H1 (cell line): ENCODE measurements at regions of chr15 and their contacts with region 1.

Region 1: DNA sequence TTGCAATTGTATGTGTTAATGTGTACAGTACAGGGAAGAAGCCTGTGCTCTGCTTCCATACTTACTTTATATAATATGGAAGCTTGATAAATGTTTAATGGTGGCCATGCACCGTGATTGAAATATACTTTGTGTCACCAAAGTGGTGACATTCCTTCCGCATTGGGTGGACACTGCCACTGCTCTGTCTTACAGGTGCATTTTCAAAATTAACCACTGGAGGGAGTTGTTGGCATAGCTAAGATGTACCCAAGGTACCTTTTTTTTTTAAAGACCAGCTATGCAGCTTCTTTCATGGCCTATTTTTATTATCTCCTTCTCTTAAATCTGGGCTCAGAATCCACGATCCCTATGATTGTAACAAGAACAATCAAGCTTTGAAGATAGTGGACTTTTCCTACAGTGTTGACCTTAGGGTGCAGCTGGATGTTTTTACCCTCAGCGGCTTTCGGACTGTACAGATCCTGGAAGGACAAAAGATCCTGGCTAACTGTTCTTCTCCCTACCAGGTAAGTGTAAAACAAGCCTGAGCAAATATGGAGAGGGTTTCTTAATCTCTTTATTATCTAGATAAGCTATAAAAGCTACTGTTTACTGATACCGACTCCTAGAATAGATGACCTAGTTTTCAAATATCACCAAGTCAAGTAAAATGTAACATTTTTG is 21.6 kb upstream of the PAK6 start:
- DNase-seq: no peak
- H3K4me3 ChIP-seq: no peak overlapping the region
- H3K27ac ChIP-seq: no peak overlapping the region
- H3K4me1 ChIP-seq: no peaks in the 10 kb centered on the region
- H3K27me3 ChIP-seq: no peaks in the 10 kb centered on the region
- CTCF ChIP-seq: peak; percentile 28 to 89 (median 78)
- EP300 ChIP-seq: no peak
- POLR2A ChIP-seq: no peak
- RAD21 ChIP-seq: peak; percentile 89 to 93

Region 2: DNA sequence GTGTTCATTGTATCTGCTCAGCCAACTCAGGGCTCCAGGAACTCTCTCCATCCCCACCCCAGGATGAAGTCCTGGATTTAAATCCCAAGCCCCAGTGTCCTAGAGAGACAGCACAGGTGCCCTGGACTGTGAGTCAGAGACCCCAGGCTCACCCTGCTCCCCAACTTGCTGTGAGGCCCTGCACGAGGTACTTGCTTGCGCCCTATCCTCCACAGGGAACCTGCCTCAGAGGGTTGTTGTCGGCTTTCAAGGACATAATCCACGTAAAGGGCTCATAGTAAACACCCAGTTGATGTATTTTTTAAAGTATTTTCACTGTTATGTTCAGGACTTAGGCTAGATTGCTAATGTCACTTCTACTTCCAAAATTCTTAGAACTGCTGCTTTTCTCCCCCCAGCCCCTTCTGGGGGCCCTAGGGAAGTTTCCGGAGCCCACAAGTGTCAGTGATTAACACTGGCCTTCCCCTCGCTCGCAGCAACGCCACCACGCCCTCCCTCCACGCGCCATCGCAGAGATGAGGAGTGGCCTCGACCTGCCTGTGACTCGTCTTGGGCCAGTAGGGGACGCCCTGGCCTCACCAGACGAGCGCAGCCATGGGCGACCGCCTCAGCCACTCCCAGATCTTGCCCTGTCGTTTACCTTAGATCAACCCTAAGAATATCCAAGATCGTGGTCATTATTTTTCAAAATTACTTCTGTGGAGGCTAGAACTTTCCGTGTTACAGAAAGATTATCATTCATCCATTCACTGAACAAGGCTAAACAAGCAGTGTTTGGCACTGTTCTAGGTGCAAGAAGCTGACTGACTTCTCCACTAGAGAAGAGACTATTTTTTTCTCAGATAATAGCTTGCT is 172.3 kb before region 1 on chr15:
- CTCF ChIA-PET with region 1: interaction called, 14 read pairs
- POLR2A ChIA-PET with region 1: no interaction called
- DNase-seq: peak in 1 of 2 experiments; percentile 86
- H3K4me3 ChIP-seq: peak overlapping the region in 1 of 4 experiments; percentile 46; a peak in 2 of 8 replicates
- H3K27ac ChIP-seq: no peak overlapping the region
- H3K4me1 ChIP-seq: peaks cover 0 to 11% (median 6%) of the 10 kb centered on the region in 4 experiments; a peak in 6 of 7 replicates
- H3K27me3 ChIP-seq: no peaks in the 10 kb centered on the region
- CTCF ChIP-seq: peak; percentile 92 to 97 (median 97)
- EP300 ChIP-seq: no peak
- POLR2A ChIP-seq: no peak
- RAD21 ChIP-seq: peak; percentile 98 to 99

Region 3: DNA sequence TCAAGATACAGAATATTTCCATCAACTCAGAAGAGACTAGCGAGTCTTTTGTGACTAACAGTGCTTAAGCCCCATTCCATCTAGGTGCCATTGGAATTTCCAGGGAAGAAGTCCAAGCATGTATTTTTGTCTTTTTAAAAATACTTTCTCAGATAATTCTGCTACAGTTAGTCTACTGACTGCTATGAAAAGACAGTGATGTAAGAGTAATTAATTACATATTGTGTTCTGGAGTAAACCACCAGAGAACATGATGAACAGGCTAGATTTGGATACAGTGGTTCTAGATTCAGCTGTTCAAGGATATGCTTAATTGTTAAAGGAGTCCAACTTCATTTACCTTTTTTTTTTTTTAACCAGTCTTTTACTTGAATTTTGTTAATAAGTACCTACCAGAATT is 13.2 kb before region 1 on chr15:
- CTCF ChIA-PET with region 1: interaction called, 25 read pairs
- POLR2A ChIA-PET with region 1: interaction called, 4 read pairs
- DNase-seq: no peak
- H3K4me3 ChIP-seq: no peak overlapping the region
- H3K27ac ChIP-seq: no peak overlapping the region
- H3K4me1 ChIP-seq: no peaks in the 10 kb centered on the region
- H3K27me3 ChIP-seq: no peaks in the 10 kb centered on the region
- CTCF ChIP-seq: no peak
- EP300 ChIP-seq: no peak
- POLR2A ChIP-seq: no peak
- RAD21 ChIP-seq: no peak

Region 4: DNA sequence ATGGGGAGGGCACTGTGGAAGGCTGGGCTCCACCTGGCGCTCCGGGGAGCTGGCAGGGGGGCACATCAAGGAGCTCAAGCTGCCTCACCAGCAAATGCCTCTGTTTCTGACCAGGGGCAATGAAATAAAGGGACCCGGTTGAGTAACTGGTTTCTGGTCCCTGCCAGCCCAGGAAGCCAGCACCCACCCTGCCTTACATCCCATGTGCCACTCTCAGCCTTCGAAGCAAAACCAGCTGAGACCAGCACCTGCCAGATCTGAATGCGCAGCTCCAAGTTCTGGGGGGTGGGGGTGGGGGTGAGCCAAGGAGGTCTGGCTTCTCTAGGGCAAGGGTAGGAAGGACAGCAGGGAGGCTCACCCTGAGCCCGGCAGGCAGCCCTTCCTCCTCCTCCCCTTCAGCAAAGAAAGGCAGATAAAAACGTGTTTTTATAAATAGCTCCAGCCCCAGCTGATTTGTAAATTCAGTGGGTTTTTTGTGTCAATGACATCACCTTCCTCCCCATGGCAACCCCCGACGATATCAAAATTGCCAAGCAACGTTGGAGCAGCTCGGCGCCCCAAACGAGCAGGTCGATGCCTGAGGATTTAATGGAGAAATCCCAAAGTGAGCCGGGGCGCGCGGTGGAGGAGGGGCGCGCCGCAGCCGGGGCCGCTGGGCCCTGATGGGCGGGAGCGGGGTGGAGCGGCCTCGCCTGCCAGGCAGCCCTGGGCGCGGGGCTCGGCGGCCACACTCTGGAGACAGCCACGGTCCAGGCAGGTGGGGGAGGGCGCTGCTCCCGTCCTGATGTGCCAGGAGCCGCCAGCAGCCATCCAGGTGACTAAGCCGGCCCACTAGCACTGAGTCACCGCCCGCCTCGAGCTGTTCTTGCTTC is 21.5 kb after region 1 on chr15 and contains the start of gene PAK6:
- CTCF ChIA-PET with region 1: interaction called, 25 read pairs
- POLR2A ChIA-PET with region 1: interaction called, 3 read pairs
- DNase-seq: peak; percentile 60 to 90
- H3K4me3 ChIP-seq: peak within 1 kb of the TSS; percentile 14 to 54 (median 30); a peak in 7 of 8 replicates
- H3K27ac ChIP-seq: no peak within 1 kb of the TSS
- H3K4me1 ChIP-seq: peaks cover 9 to 18% (median 14%) of the 10 kb centered on the region in 4 experiments
- H3K27me3 ChIP-seq: peaks cover 0 to 6% (median 2%) of the 10 kb centered on the region in 4 experiments; a peak in 2 of 7 replicates
- CTCF ChIP-seq: peak in 1 of 3 experiments; percentile 4; a peak in 1 of 4 replicates
- EP300 ChIP-seq: no peak
- POLR2A ChIP-seq: peak in 1 of 2 experiments; percentile 64; a peak in 2 of 3 replicates
- RAD21 ChIP-seq: no peak
- total RNA-seq, gene PAK6: 9.0 and 9.4 TPM in 2 replicates

Region 5: DNA sequence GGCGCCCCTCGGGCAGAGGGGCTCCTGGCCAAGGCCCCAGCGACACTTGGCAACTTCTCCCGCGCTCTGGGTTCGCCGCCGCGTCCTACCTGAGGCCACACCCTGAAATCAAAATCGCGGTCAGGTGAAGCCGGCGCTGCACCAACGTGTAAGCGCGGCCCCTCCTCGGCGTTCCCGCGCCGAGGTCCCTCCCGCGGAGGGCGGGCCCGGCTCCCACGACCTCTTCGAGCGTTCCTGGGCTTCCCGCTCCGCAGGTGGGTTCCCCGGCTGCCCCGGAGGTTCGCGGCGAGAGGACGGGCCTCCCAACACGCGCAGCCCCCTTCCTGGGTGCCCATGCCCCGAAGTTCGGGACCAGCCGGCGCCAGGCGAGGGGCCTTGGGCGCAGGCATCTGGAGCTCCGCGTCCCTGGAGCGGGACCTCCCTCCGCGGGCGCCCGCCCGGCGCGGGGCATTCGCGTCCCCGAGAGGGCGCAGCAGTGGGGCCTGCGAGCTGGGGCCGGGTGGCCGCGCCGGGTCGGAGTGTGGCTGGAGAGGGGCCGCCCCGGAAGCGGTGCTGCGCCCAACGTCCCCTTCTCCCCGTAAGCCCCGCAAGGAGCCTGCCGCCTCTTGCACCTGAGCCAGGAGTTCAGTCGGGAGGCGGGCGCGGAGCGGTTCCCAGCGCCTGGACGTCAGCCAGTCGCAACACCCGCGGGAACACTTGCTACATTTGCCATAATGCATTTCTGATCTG is 35.3 kb after region 1 on chr15:
- CTCF ChIA-PET with region 1: interaction called, 32 read pairs
- POLR2A ChIA-PET with region 1: interaction called, 3 read pairs
- DNase-seq: peak in 1 of 2 experiments; percentile 76
- H3K4me3 ChIP-seq: peak overlapping the region; percentile 50 to 71 (median 54)
- H3K27ac ChIP-seq: no peak overlapping the region
- H3K4me1 ChIP-seq: peaks cover 0 to 10% (median 7%) of the 10 kb centered on the region in 4 experiments; a peak in 5 of 7 replicates
- H3K27me3 ChIP-seq: peaks cover 11 to 41% (median 32%) of the 10 kb centered on the region in 4 experiments
- CTCF ChIP-seq: no peak
- EP300 ChIP-seq: no peak
- POLR2A ChIP-seq: peak in 1 of 2 experiments; percentile 30; a peak in 1 of 3 replicates
- RAD21 ChIP-seq: no peak

Region 6: DNA sequence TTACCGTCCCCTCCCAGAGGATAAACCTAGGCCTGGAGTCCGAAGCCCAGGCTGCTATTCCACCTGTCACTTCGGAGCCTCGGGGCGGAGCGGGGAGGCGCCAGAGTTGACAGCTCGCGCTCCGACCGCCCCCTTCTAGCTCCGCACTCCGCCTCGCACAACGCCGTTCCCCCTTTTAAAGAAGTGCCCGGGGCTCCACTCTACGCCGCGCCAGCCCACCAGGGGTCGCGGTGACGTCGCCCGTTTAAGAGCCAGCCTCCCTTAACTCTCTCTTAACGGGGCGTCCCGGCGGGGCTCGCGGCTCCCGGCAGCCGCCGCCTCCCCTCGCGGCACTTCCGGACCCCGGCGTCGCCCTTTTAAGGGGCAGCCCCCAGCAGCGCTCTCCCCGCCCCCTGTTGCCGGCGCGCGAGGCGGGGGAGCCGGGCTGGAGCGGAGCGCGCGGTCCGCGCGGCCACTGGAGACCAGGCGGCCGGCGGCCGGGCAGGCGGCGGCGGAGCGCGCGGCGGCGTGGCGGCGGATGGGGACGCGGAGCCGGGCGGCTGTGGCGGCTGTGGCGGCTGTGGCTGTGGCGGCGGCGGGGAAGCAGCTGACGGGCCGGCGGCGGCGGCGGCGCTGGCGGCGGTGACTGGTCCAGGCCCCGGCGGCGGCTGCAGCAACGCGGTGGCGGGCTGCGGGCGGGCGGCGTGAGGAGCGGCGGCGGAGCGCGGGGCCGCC is 106.1 kb after region 1 on chr15 and contains the start of gene INAFM2:
- CTCF ChIA-PET with region 1: interaction called, 10 read pairs
- POLR2A ChIA-PET with region 1: no interaction called
- DNase-seq: peak; percentile 90 to 92
- H3K4me3 ChIP-seq: peak within 1 kb of the TSS; percentile 62 to 79 (median 70)
- H3K27ac ChIP-seq: no peak within 1 kb of the TSS
- H3K4me1 ChIP-seq: peaks cover 21 to 44% (median 31%) of the 10 kb centered on the region in 4 experiments
- H3K27me3 ChIP-seq: peaks cover 0 to 20% (median 9%) of the 10 kb centered on the region in 4 experiments; a peak in 4 of 7 replicates
- CTCF ChIP-seq: peak; percentile 22 to 36 (median 30)
- EP300 ChIP-seq: peak in 1 of 2 experiments; percentile 58; a peak in 1 of 3 replicates
- POLR2A ChIP-seq: peak in 1 of 2 experiments; percentile 49; a peak in 1 of 3 replicates
- RAD21 ChIP-seq: peak in 1 of 2 experiments; percentile 20; a peak in 1 of 4 replicates
- total RNA-seq, gene INAFM2: 35.1 and 38.2 TPM in 2 replicates